ENCODE measurements at regions of chr2 and their contacts with region 1.

Region 1: GRCh38 chr2:19963386-19963785 is 26.5 kb downstream of the WDR35 start:
- DNase-seq: no peak
- H3K4me3 ChIP-seq: no peak overlapping the region
- H3K27ac ChIP-seq: no peak overlapping the region
- H3K4me1 ChIP-seq: no peaks in the 10 kb centered on the region
- H3K27me3 ChIP-seq: no peaks in the 10 kb centered on the region
- CTCF ChIP-seq: no peak
- EP300 ChIP-seq: no peak
- POLR2A ChIP-seq: no peak

Region 2: GRCh38 chr2:20106746-20107145 is 143.4 kb after region 1 on chr2:
- intact Hi-C with region 1: loop called in 1 of 4 experiments (anchors 10 kb)
- DNase-seq: no peak
- H3K4me3 ChIP-seq: no peak overlapping the region
- H3K27ac ChIP-seq: no peak overlapping the region
- H3K4me1 ChIP-seq: no peaks in the 10 kb centered on the region
- H3K27me3 ChIP-seq: no peaks in the 10 kb centered on the region
- CTCF ChIP-seq: no peak
- EP300 ChIP-seq: no peak
- POLR2A ChIP-seq: no peak

Region 3: DNA sequence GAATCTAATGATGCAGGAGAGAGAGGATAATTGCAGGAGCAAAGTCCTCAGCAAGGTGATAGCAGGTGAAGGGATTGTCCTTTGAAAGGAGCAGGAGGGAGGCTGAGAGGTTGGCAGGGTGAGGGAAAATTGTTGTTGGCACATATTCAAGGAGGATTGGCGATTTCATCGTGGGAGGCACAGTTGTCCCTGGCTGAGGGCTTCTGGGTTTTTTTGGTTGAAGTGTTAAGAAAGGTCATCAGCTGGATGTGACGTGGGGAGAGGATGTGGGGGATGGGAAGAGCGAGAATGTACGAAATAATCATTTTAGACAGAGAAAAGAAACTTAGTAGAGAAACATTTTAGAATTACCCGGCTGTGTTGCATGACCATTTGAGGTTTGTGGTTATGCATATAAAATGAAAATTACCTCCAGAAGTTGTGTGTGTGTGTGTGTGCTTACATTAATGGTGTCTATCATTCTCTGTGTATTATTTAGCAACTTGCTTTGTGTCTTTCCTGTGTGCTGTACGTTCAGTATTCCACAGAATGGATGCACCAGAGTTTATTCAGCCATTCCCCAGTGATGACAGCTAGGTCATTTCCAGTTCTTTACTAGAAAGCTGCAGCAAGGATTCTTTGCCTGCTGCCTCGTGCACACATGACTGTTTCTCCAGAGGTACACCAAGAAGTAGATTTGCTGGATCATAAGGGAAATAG is 194.0 kb after region 1 on chr2:
- intact Hi-C with region 1: no loop called
- DNase-seq: no peak
- H3K4me3 ChIP-seq: no peak overlapping the region
- H3K27ac ChIP-seq: no peak overlapping the region
- H3K4me1 ChIP-seq: no peaks in the 10 kb centered on the region
- H3K27me3 ChIP-seq: no peaks in the 10 kb centered on the region
- CTCF ChIP-seq: no peak
- EP300 ChIP-seq: no peak
- POLR2A ChIP-seq: no peak